GM10248 (cell line): ENCODE measurements at regions of chr5 and their contacts with region 1.

Region 1: GRCh38 chr5:39283231-39283818 is 64.0 kb upstream of the FYB1 start:
- DNase-seq: peak; percentile 50
- CTCF ChIP-seq: peak; percentile 65

Region 2: GRCh38 chr5:39211773-39212172 is 71.6 kb before region 1 on chr5:
- CTCF ChIA-PET with region 1: interaction called, 106 read pairs
- POLR2A ChIA-PET with region 1: no interaction called
- DNase-seq: no peak
- CTCF ChIP-seq: no peak

Region 3: DNA sequence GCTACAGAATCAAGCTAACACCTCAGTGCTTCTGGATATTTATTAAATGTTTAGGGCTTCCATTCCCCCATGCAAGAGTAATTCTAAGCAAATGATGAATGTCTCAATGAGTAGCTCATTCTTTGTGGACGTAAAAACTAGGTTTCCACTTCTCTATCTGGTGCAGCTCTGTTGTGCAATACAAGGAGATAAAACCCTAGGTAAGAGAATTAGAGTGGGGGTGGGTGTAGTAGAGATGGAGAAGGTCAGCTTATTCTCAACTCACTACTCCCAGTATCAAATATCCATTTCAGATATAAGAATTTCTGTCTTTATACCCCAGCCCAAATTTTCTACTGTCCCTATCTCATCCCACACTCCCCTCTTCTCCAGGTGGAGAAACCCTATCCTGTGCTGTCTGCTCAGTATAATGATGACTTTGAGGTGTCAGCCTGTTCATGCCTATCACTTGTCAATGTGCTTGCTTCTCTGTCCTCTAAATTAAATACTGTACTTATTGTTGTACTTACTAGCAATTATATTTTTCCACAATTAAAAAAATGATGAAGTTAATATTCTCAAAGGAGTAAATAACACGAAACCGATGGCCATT is 59.7 kb before region 1 on chr5:
- CTCF ChIA-PET with region 1: interaction called, 106 read pairs
- POLR2A ChIA-PET with region 1: no interaction called
- DNase-seq: no peak
- CTCF ChIP-seq: no peak

Region 4: DNA sequence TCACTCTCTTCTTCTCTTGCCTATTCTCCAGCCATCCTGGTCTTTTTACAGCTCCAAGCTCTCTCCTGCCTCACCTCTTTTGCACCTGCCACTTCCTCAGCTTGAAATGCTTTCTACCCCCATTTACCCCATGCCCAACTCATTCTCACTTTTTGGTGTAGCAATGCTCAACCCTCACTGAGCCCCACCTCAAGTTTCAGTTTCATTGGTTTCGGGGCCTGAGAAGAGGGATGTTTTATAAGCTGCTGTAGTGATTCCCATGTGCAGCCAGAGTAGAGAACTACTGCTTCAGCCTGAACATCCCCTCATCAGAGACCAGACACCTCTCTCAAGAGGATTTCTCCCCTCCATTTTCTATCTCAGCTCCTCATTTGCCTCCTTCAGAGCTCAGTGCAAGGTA is 18.8 kb before region 1 on chr5:
- CTCF ChIA-PET with region 1: interaction called, 16 read pairs
- POLR2A ChIA-PET with region 1: no interaction called
- DNase-seq: peak; percentile 35
- CTCF ChIP-seq: no peak

Region 5: GRCh38 chr5:39427229-39427628 is 143.9 kb after region 1 on chr5:
- CTCF ChIA-PET with region 1: no interaction called
- POLR2A ChIA-PET with region 1: no interaction called
- DNase-seq: no peak
- CTCF ChIP-seq: no peak